PC-3 (cell line): ENCODE measurements at regions of chr3 and their contacts with region 1.

Region 1: GRCh38 chr3:185558395-185558794 is 6.0 kb upstream of the LIPH start:
- DNase-seq: peak; percentile 96
- ATAC-seq: peak; percentile 78
- H3K4me3 ChIP-seq: peak overlapping the region; percentile 67; the same call in 1 of the 2 replicates
- H3K27ac ChIP-seq: peak overlapping the region; percentile 87
- H3K4me1 ChIP-seq: peaks cover 31% of the 10 kb centered on the region
- H3K27me3 ChIP-seq: no peaks in the 10 kb centered on the region
- CTCF ChIP-seq: no peak

Region 2: GRCh38 chr3:185341616-185342457 is 216.6 kb before region 1 on chr3:
- CTCF ChIA-PET with region 1: interaction called, 3 read pairs
- POLR2A ChIA-PET with region 1: no interaction called
- intact Hi-C with region 1: loop called (anchors 5 kb)
- DNase-seq: peak; percentile 77
- ATAC-seq: peak; percentile 57
- H3K4me3 ChIP-seq: peak overlapping the region; percentile 39; the same call in 1 of the 2 replicates
- H3K27ac ChIP-seq: peak overlapping the region; percentile 92
- H3K4me1 ChIP-seq: peaks cover 47% of the 10 kb centered on the region
- H3K27me3 ChIP-seq: no peaks in the 10 kb centered on the region
- CTCF ChIP-seq: no peak

Region 3: DNA sequence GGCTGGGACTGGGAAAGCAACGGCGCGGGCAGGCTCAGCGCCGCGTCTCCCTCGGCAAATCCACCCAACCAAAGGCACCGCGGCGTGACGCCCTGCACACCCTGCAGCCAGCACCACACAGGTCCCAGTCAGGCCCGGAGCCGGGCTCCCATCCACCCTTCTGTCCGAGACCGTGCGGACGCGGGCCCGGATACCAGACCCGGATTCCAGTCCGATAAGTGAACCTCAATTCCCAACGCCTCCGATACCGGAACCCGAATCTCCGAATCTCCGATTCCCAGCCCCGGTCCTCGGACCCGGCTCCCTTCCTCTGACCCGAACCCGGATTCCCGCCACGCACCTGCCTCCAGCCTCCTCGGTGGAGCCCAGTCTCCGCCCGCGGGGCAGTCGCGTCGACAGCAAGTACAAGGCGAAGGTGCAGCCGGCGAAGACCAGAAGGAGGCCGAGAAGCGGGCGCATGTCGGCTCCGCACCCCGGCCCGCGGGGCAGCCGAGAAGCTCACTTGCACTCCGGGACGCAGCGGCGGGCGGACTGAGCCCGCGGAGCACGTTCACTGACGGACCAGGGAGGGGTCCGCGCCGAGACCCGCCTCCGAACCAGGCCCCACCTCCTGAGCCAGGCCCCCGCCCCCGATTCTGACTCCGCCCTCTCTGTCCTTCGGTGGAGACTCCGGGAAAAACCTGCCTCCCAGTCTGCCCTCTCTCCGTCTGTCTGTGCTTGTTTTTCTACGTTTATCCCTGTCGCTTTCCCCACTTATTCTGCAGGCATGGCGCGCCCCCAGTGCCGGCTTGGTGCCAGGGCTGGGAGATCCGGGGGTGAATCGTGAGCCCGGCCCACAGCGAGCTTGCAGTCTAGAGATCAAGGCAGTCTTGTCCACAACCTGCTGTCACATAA is 59.6 kb before region 1 on chr3 and contains the start of gene TMEM41A:
- CTCF ChIA-PET with region 1: interaction called, 3 read pairs
- POLR2A ChIA-PET with region 1: interaction called, 4 read pairs
- intact Hi-C with region 1: loop called (anchors 1 kb)
- DNase-seq: peak; percentile 93
- ATAC-seq: peak; percentile 93
- H3K4me3 ChIP-seq: peak within 1 kb of the TSS; percentile 98
- H3K27ac ChIP-seq: peak within 1 kb of the TSS; percentile 58
- H3K4me1 ChIP-seq: peaks cover 14% of the 10 kb centered on the region
- H3K27me3 ChIP-seq: no peaks in the 10 kb centered on the region
- CTCF ChIP-seq: no peak
- total RNA-seq, gene TMEM41A: 25.3 and 28.5 TPM in 2 replicates

Region 4: GRCh38 chr3:185572183-185572582 is 13.8 kb after region 1 on chr3:
- CTCF ChIA-PET with region 1: interaction called, 12 read pairs
- POLR2A ChIA-PET with region 1: interaction called, 3 read pairs
- intact Hi-C with region 1: no loop called
- DNase-seq: no peak
- ATAC-seq: no peak
- H3K4me3 ChIP-seq: no peak overlapping the region
- H3K27ac ChIP-seq: no peak overlapping the region
- H3K4me1 ChIP-seq: no peaks in the 10 kb centered on the region
- H3K27me3 ChIP-seq: no peaks in the 10 kb centered on the region
- CTCF ChIP-seq: no peak